HEK293 (cell line): ENCODE measurements at regions of chr1 and their contacts with region 1.

Region 1: DNA sequence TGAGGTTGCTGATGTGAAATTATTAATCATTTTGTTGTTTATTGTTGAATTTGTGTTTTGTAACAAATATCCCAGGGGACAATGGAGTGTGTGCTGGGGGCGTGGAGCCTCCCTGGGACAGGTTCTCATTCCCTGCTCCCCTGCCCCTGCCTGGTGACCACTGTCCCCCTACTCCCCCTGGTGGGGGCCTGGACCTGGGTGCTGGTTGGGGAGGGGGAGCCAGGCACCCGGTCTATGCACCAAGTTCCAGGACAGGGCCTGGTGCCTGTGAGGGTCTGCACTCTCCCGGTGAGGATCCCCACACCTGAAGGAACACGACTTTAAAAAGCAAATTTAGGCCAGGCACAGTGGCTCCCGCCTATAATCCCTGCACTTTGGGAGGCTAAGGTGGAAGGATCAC is 42.4 kb downstream of the CHD5 start:
- H3K4me3 ChIP-seq: no peak overlapping the region
- H3K27ac ChIP-seq: no peak overlapping the region
- H3K4me1 ChIP-seq: no peaks in the 10 kb centered on the region
- CTCF ChIP-seq: no peak

Region 2: GRCh38 chr1:6148497-6149241 is 10.9 kb after region 1 on chr1:
- CTCF ChIA-PET with region 1: no interaction called
- POLR2A ChIA-PET with region 1: interaction called, 10 read pairs
- H3K4me3 ChIP-seq: 0 out of 2 replicates have a peak overlapping the region, but pooled peaks have one; percentile 13
- H3K27ac ChIP-seq: no peak overlapping the region; the same call in 1 of the 2 replicates
- H3K4me1 ChIP-seq: no peaks in the 10 kb centered on the region; the same call in 1 of the 2 replicates
- CTCF ChIP-seq: peak; percentile 10; the same call in 1 of the 2 replicates